ENCODE measurements at regions of chr10 and their contacts with region 1.

Region 1: GRCh38 chr10:74081192-74081803 is 69.3 kb downstream of the AP3M1 start:
- DNase-seq: peak; percentile 55 to 80 (median 68)
- ATAC-seq: peak; percentile 92
- H3K4me3 ChIP-seq: no peak overlapping the region
- H3K27ac ChIP-seq: no peak overlapping the region
- H3K4me1 ChIP-seq: peaks cover 0 to 15% of the 10 kb centered on the region in 2 experiments; a peak in 1 of 5 replicates
- H3K27me3 ChIP-seq: no peaks in the 10 kb centered on the region
- CTCF ChIP-seq: peak; percentile 79 to 85 (median 82)
- EP300 ChIP-seq: no peak
- POLR2A ChIP-seq: no peak
- RAD21 ChIP-seq: peak; percentile 84 to 86

Region 2: DNA sequence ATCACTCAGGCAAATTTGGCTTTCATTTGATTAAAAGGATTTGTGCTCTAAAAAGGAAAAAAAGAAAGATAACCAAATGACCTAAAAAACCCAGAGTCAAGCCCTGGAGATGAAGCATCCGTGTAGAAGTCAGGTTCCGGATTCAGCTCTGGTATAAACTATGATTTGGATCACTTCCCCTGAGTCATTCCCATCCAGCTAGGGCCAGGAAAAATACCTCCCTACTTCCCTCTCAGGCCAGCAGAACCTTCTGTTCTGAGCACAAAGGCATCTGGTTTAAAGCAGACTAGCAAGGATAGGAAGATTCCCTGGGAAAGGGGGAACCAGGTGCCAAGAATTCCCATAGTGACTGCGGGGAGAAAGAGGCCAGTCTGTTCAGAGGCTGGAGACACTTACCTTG is 244.2 kb before region 1 on chr10:
- CTCF ChIA-PET with region 1: no interaction called
- POLR2A ChIA-PET with region 1: no interaction called
- in situ Hi-C with region 1: no loop called
- intact Hi-C with region 1: no loop called
- DNase-seq: no peak
- ATAC-seq: no peak
- H3K4me3 ChIP-seq: no peak overlapping the region
- H3K27ac ChIP-seq: no peak overlapping the region
- H3K4me1 ChIP-seq: peaks cover 0 to 10% of the 10 kb centered on the region in 2 experiments; a peak in 1 of 5 replicates
- H3K27me3 ChIP-seq: no peaks in the 10 kb centered on the region
- CTCF ChIP-seq: no peak
- EP300 ChIP-seq: no peak
- POLR2A ChIP-seq: no peak
- RAD21 ChIP-seq: no peak

Region 3: DNA sequence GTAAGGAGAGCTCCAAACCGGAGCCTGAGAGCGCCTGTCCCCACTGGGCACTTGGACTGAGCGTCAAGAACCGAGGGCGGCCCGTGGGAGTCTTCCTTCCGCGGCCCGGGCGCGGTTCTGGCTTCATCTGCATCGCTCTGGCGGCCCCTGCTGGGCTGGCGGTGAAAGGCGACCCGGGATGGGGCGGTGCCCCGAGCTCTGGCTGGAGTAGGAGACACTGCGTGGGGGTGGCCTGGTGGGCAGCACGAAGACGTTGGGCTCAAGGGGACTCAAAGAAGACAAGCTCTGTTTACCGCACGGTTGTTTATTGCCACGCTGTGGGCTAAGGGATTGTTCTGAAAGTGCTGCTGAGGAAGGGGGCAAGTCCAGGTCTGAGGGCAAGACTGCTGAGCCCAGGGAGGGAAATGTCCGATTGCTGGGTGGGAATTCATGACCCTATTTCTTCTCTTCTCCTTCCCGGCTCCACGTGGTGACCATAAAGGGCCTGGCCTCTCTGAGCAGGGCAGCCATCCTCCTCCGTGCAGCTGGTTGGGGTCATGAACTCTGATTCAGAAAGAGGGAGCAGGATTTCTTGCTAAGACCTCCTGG is 140.6 kb before region 1 on chr10:
- CTCF ChIA-PET with region 1: no interaction called
- POLR2A ChIA-PET with region 1: interaction called, 4 read pairs
- in situ Hi-C with region 1: no loop called
- intact Hi-C with region 1: loop called (anchors 2 kb)
- DNase-seq: peak; percentile 93 to 97 (median 96)
- ATAC-seq: peak; percentile 99
- H3K4me3 ChIP-seq: peak overlapping the region; percentile 2; the same call in 1 of the 2 replicates
- H3K27ac ChIP-seq: peak overlapping the region; percentile 51
- H3K4me1 ChIP-seq: peaks cover 18% of the 10 kb centered on the region in 2 experiments; a peak in 4 of 5 replicates
- H3K27me3 ChIP-seq: no peaks in the 10 kb centered on the region
- CTCF ChIP-seq: peak; percentile 96 to 99 (median 97)
- EP300 ChIP-seq: 0 out of 2 replicates have a peak, but pooled peaks have one; percentile 12
- POLR2A ChIP-seq: peak; percentile 41; the same call in 1 of the 2 replicates
- RAD21 ChIP-seq: peak; percentile 99 to 100

Region 4: DNA sequence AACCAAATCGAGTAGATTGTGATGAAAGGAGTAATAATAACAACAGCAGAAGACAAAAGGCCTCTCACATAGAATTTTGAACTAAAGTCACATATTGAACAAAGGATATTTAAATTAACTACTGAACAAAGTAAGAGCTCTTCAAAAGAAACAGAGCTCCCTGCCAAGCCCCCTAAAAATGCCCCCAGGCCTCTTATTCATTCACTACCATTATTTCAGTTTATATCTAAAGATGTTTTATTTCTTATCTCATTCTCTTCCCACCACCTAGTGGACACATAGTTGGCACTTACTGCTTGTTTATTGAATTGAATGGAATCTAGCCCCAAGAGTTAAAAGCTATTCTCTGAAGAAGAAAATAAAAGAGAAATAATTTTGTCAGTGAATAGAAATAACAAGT is 46.0 kb before region 1 on chr10:
- CTCF ChIA-PET with region 1: no interaction called
- POLR2A ChIA-PET with region 1: no interaction called
- in situ Hi-C with region 1: no loop called
- intact Hi-C with region 1: no loop called
- DNase-seq: no peak
- ATAC-seq: no peak
- H3K4me3 ChIP-seq: no peak overlapping the region
- H3K27ac ChIP-seq: no peak overlapping the region
- H3K4me1 ChIP-seq: peaks cover 15 to 36% of the 10 kb centered on the region in 2 experiments
- H3K27me3 ChIP-seq: no peaks in the 10 kb centered on the region
- CTCF ChIP-seq: peak in 1 of 3 experiments; percentile 43; a peak in 2 of 6 replicates
- EP300 ChIP-seq: no peak
- POLR2A ChIP-seq: no peak
- RAD21 ChIP-seq: peak; percentile 32 to 51

Region 5: DNA sequence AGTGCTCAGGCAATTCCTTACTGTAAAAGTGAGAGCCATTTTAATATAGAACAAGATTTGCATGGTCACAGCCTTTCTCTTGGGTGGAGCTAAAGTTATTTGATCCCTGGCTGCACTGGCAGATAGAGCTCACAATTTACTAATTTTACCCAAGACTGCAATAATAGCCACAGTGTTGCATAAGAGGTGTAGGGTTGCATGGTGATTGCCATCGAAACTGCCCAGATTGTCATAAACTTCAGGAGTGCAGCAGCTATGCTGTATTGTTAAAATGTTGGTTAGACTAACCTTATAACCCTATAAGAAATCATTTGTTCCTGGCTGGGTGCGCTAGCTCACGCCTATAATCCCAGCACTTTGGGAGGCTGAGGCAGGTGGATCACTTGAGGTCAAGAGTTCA is 33.4 kb before region 1 on chr10:
- CTCF ChIA-PET with region 1: no interaction called
- POLR2A ChIA-PET with region 1: no interaction called
- in situ Hi-C with region 1: no loop called
- intact Hi-C with region 1: no loop called
- DNase-seq: no peak
- ATAC-seq: peak; percentile 40
- H3K4me3 ChIP-seq: no peak overlapping the region
- H3K27ac ChIP-seq: no peak overlapping the region; the same call in 2 of the 3 replicates
- H3K4me1 ChIP-seq: peaks cover 3 to 12% of the 10 kb centered on the region in 2 experiments; a peak in 3 of 5 replicates
- H3K27me3 ChIP-seq: no peaks in the 10 kb centered on the region
- CTCF ChIP-seq: no peak
- EP300 ChIP-seq: no peak
- POLR2A ChIP-seq: no peak
- RAD21 ChIP-seq: no peak

Region 6: GRCh38 chr10:74067373-74068352 is 13.6 kb before region 1 on chr10:
- CTCF ChIA-PET with region 1: no interaction called
- POLR2A ChIA-PET with region 1: interaction called, 16 read pairs
- in situ Hi-C with region 1: no loop called
- intact Hi-C with region 1: no loop called
- DNase-seq: peak in 1 of 4 experiments; percentile 65
- ATAC-seq: peak; percentile 69
- H3K4me3 ChIP-seq: no peak overlapping the region
- H3K27ac ChIP-seq: 0 out of 3 replicates have a peak overlapping the region, but pooled peaks have one; percentile 13
- H3K4me1 ChIP-seq: peaks cover 8 to 11% of the 10 kb centered on the region in 2 experiments; a peak in 4 of 5 replicates
- H3K27me3 ChIP-seq: no peaks in the 10 kb centered on the region
- CTCF ChIP-seq: no peak
- EP300 ChIP-seq: peak; percentile 68
- POLR2A ChIP-seq: no peak; the same call in 1 of the 2 replicates
- RAD21 ChIP-seq: no peak